ENCODE measurements at regions of chr21 and their contacts with region 1.

Region 1: DNA sequence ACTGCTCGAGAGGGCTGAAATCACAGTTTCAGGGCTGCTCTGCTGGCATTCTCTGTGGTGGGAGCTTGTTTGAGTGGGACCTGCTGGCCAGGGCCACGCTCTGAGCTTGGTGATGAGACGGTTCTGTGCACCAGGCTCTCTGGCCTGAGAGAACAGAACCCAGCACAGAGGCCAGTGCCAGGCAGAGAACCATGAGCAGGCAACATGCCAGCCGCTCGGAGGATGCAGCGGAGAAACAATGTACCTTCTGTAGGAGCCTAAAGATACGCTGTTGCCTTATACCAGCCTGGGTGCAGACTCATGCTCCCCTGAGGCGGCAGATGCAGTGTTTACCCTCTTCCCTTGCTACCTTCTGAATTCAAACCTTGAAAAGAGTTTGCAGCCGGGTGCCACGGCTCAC is 10.0 kb downstream of the C2CD2 start:
- DNase-seq: no peak
- ATAC-seq: no peak
- H3K4me3 ChIP-seq: no peak overlapping the region
- H3K4me3 Mint-ChIP-seq: no peak overlapping the region
- H3K27ac ChIP-seq: no peak overlapping the region
- H3K27ac Mint-ChIP-seq: no peak overlapping the region
- H3K4me1 ChIP-seq: no peaks in the 10 kb centered on the region
- H3K4me1 Mint-ChIP-seq: no peaks in the 10 kb centered on the region
- H3K27me3 ChIP-seq: peaks cover 0 to 6% of the 10 kb centered on the region in 2 experiments
- H3K27me3 Mint-ChIP-seq: no peaks in the 10 kb centered on the region

Region 2: GRCh38 chr21:42324896-42325295 is 381.0 kb after region 1 on chr21:
- CTCF ChIA-PET with region 1: no interaction called
- POLR2A ChIA-PET with region 1: interaction called in 1 of 2 experiments, 17 read pairs
- DNase-seq: no peak
- ATAC-seq: no peak
- H3K4me3 ChIP-seq: no peak overlapping the region
- H3K4me3 Mint-ChIP-seq: no peak overlapping the region
- H3K27ac ChIP-seq: no peak overlapping the region
- H3K27ac Mint-ChIP-seq: no peak overlapping the region
- H3K4me1 ChIP-seq: peaks cover 0 to under 1% of the 10 kb centered on the region in 2 experiments
- H3K4me1 Mint-ChIP-seq: peaks cover 0 to 5% (median 0%) of the 10 kb centered on the region in 3 donors
- H3K27me3 ChIP-seq: peaks cover 0 to 11% of the 10 kb centered on the region in 2 experiments
- H3K27me3 Mint-ChIP-seq: peaks cover 12 to 22% of the 10 kb centered on the region in 2 donors

Measured in T-cell (primary cell).